Esophagus squamous epithelium (tissue), 5 donors: ENCODE measurements at regions of chr10 and their contacts with region 1.

Region 1: DNA sequence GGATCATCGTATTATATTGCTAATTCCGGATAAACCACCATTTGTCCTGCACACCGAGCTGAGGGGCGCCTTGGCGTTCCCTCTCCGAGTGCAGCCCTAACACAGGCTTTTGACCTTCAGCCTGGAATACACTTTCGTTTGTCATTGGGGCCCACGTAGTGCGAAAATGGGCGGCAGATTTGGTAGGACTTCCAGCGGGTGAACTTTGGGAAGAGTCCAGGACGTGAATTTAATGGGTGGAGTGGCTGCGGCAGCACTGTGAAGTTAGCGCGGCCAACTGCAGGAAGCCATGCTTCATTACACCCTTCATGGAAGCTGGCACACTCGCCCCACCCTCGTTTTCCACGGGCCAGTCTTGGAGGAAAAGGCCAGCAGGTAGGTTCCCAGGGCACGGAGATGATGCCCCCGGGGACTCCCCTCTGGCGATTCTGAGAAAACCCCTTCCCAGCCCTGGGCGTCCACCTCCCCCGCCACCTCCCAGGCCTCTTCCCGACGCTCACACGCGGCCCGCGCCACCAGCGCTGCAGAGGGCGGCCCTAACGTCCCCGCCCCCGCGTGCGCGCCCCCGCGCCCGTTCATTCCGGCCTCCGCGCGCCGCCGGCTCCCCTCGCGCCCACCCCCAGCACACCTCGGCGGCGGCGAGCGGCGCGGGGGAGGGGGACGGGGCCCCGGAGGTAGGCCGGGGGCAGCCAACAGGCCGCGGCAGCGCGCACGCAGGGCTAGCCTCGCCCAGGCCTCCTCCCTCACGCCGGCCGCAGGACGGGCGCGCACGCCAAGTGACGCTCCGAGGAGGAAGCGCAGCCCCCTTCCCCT is at the start of gene MLLT10:
- DNase-seq: peak; percentile 65
- H3K4me3 ChIP-seq: peak within 1 kb of the TSS; percentile 61 to 96 (median 82)
- H3K27ac ChIP-seq: peak within 1 kb of the TSS; percentile 91 to 100 (median 96)
- H3K4me1 ChIP-seq: peaks cover 4 to 72% (median 19%) of the 10 kb centered on the region in 3 donors
- H3K27me3 ChIP-seq: no peaks in the 10 kb centered on the region
- CTCF ChIP-seq: peak in 4 of 6 experiments; percentile 12 to 47 (median 25)
- POLR2A ChIP-seq: peak in 3 of 4 donors; percentile 44 to 87 (median 77)
- total RNA-seq, gene MLLT10: 22.7 to 49.6 (median 32.4) TPM

Region 2: GRCh38 chr10:21249435-21249834 is 284.2 kb before region 1 on chr10:
- intact Hi-C with region 1: no loop called
- DNase-seq: no peak
- H3K4me3 ChIP-seq: no peak overlapping the region
- H3K27ac ChIP-seq: no peak overlapping the region
- H3K4me1 ChIP-seq: no peaks in the 10 kb centered on the region
- H3K27me3 ChIP-seq: peaks cover 0 to 6% (median 0%) of the 10 kb centered on the region in 4 donors
- CTCF ChIP-seq: no peak
- POLR2A ChIP-seq: no peak

Region 3: GRCh38 chr10:21584834-21585530 is 51.3 kb after region 1 on chr10:
- intact Hi-C with region 1: no loop called
- DNase-seq: no peak
- H3K4me3 ChIP-seq: no peak overlapping the region
- H3K27ac ChIP-seq: no peak overlapping the region
- H3K4me1 ChIP-seq: peaks cover 0 to 7% (median 0%) of the 10 kb centered on the region in 3 donors
- H3K27me3 ChIP-seq: no peaks in the 10 kb centered on the region
- CTCF ChIP-seq: no peak
- POLR2A ChIP-seq: no peak

Region 4: GRCh38 chr10:21724695-21725367 is 191.2 kb after region 1 on chr10:
- intact Hi-C with region 1: loop called (anchors 10 kb)
- DNase-seq: peak; percentile 28
- H3K4me3 ChIP-seq: no peak overlapping the region
- H3K27ac ChIP-seq: peak overlapping the region in 3 of 4 donors; percentile 18 to 73 (median 69)
- H3K4me1 ChIP-seq: peaks cover 10 to 71% (median 23%) of the 10 kb centered on the region in 3 donors
- H3K27me3 ChIP-seq: no peaks in the 10 kb centered on the region
- CTCF ChIP-seq: no peak
- POLR2A ChIP-seq: no peak